Activated naive CD4-positive, alpha-beta T cell treated with anti-CD3 and anti-CD28 coated beads for 36 hours (primary cell): ENCODE measurements at regions of chr4 and their contacts with region 1.

Region 1: DNA sequence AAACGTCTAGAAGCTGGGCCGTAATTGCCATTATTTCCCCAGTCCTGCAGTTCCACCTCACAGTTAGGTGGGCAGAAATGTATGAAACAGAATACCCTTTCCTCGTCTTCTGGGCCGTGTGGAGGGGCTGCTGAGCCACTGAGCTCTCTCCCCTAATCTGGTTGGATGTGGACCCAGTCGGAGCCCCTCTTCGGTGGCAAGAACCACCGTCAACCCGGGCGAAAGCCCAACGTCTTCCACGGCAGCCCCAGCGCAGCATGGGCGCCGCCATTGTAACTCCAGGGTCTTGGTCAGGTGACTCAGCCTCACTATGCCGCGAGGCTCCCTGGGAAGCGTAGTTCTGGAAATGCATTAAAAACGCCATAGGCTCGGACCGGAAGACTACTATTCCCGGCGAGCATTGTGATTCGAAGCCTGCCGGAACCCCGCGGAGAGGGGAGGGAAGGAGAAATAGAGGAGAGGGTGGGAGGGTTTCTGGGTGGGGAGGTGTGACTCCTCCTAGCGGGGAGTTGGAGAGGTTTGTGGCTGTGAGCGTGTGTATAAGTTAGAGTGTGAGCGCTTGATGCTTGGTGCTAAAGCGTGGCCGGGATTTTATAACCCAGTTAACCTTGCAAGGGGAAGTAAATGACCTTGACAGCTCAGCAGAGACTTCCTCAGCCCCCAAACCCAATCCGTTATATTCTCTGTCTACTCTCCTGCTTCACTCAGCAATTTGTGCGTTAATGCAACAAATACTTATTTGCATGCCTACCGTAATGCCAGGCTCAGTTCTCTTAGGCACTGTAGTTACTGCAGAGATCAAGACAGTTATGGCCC is at the start of gene GATB:
- DNase-seq: peak; percentile 95
- H3K4me3 Mint-ChIP-seq: peak within 1 kb of the TSS; percentile 99
- H3K27ac Mint-ChIP-seq: peak within 1 kb of the TSS; percentile 89
- H3K4me1 Mint-ChIP-seq: peaks cover 13% of the 10 kb centered on the region
- H3K27me3 Mint-ChIP-seq: no peaks in the 10 kb centered on the region
- total RNA-seq, gene GATB: 15.2 to 22.1 TPM

Region 2: GRCh38 chr4:151015459-151016347 is 745.2 kb before region 1 on chr4:
- CTCF ChIA-PET with region 1: no interaction called
- intact Hi-C with region 1: loop called (anchors 1 kb)
- DNase-seq: peak; percentile 71
- H3K4me3 Mint-ChIP-seq: peak overlapping the region; percentile 100
- H3K27ac Mint-ChIP-seq: peak overlapping the region; percentile 99
- H3K4me1 Mint-ChIP-seq: peaks cover 23% of the 10 kb centered on the region
- H3K27me3 Mint-ChIP-seq: no peaks in the 10 kb centered on the region

Region 3: DNA sequence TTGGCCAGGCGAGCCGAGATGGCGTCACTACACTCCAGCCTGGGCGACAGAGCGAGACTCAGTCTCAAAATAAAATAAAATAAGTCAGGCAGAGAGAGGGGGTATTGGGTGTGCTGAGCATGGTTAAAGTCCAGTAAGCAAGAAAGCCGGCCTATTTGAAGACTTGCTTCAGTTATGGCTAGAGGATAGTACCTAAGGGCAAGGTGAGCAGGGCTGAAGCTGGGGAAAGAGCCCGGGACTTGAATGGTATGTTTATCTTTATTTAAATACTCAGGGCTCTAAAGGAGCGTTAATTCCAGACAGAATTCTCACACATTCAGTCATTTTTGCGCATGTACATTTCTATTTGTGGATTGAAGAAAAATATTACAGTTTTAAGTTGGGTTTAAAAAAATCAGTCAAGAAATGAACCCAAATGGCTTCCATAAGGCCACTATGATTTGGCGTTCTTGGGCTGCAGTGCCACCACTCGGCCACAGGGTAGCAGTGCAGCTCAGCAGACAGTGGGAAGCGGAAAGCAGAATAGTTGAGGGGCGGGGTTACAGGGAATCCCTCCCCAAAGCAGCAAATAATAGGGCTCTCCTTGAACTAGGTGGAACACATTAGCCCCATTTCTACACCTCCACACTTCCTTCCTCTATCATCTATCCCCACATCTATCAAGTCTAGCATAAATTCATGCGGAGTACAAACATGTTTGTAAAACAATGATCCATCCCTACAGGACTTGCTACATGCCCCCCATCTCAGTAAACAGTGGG is 398.3 kb before region 1 on chr4:
- CTCF ChIA-PET with region 1: no interaction called
- intact Hi-C with region 1: loop called (anchors 1 kb)
- DNase-seq: peak; percentile 90
- H3K4me3 Mint-ChIP-seq: no peak overlapping the region
- H3K27ac Mint-ChIP-seq: no peak overlapping the region
- H3K4me1 Mint-ChIP-seq: no peaks in the 10 kb centered on the region
- H3K27me3 Mint-ChIP-seq: no peaks in the 10 kb centered on the region

Region 4: DNA sequence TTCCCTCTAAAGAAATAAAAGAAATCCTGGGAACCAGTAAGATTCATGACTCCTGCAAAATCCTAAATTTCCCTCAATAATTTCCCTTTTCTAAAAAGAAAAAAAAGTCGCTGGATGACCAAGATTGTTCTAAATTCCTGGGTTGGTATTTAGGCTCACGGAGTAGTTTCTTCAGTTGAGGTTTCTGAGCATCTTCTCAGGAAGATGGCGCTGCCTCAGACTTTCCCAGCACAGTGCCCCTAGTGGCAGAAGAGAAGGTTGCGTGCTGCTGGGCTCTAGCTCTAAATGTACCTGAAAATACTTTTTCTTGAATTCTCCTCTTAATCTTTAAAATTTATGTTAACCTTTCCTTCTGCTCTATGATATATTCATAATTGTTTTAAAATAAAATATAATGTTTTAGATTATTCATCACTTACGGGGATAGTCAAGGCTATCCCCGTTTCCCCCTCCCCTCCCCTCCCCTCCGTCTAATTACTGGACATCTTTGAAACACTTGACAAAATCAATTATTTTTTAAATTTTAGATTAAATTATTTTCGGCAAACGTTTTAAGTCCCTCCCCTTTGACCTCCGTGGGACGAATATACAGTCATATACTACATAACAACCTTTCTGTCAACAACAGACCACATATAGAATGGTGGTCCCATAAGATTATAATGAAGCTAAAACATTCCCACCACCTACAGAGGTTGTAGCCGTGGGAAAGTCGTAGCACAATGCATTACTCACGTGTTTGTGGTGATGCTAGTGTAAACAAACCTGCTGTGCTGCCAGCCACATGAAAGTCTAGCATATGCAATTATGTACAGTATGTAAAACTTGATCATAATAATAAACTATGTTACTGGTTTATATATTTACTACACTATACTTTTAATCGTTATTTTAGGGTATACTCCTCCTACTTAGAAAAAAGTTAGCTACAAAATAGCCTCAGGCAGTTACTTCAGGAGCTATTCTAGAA is 40.9 kb after region 1 on chr4:
- CTCF ChIA-PET with region 1: interaction called, 3 read pairs
- intact Hi-C with region 1: loop called (anchors 1 kb)
- DNase-seq: peak; percentile 76
- H3K4me3 Mint-ChIP-seq: no peak overlapping the region
- H3K27ac Mint-ChIP-seq: no peak overlapping the region
- H3K4me1 Mint-ChIP-seq: no peaks in the 10 kb centered on the region
- H3K27me3 Mint-ChIP-seq: no peaks in the 10 kb centered on the region

Region 5: GRCh38 chr4:152014280-152014679 is 253.4 kb after region 1 on chr4:
- CTCF ChIA-PET with region 1: no interaction called
- intact Hi-C with region 1: loop called (anchors 2 kb)
- DNase-seq: peak; percentile 81
- H3K4me3 Mint-ChIP-seq: no peak overlapping the region
- H3K27ac Mint-ChIP-seq: no peak overlapping the region
- H3K4me1 Mint-ChIP-seq: peaks cover 49% of the 10 kb centered on the region
- H3K27me3 Mint-ChIP-seq: no peaks in the 10 kb centered on the region

Region 6: DNA sequence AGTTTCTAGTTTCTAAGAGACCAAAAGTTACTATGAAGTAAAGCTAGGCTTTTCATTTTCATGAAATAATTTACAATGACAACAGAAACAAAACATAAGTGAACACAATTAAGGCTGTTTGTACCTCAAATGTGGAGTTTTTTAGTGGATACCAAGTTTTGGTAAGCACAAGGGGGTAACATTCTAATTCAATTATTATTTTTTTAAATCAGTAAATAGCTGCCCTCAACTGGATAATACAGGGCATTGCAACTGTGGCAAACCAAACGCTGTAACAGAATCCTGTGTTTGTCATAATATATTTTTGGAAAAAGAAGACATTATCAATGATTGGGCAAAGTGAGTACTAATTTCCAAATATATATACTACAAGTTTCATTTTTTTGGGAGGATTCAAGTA is 624.6 kb after region 1 on chr4:
- CTCF ChIA-PET with region 1: no interaction called
- intact Hi-C with region 1: loop called (anchors 5 kb)
- DNase-seq: peak; percentile 10
- H3K4me3 Mint-ChIP-seq: no peak overlapping the region
- H3K27ac Mint-ChIP-seq: no peak overlapping the region
- H3K4me1 Mint-ChIP-seq: peaks cover 13% of the 10 kb centered on the region
- H3K27me3 Mint-ChIP-seq: no peaks in the 10 kb centered on the region